AG04449 (cell line): ENCODE measurements at regions of chr9 and their contacts with region 1.

Region 1: DNA sequence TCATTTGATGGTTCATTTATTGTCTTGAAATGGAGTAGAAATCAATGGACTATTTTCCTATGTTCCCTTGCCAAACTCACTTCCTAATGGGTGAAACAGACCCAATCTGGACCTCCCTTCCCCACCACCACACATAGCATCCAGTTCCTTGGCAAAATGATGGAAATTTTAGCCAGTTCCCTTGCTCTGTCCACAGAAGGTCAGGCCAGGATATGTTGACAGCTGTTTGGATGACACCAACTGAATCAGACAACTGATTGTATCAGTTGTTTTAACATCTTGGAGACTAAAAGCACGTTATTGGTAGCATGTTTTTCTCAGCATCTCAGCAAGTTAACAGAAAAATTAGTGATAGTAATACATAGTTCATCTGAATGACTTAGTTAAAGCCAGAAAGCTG is 534.8 kb downstream of the PSAT1 start:
- DNase-seq: no peak
- H3K4me3 ChIP-seq: no peak overlapping the region
- CTCF ChIP-seq: no peak

Region 2: GRCh38 chr9:78713614-78714405 is 117.9 kb before region 1 on chr9:
- CTCF ChIA-PET with region 1: no interaction called
- POLR2A ChIA-PET with region 1: no interaction called
- DNase-seq: peak; percentile 41
- H3K4me3 ChIP-seq: no peak overlapping the region
- CTCF ChIP-seq: no peak

Region 3: DNA sequence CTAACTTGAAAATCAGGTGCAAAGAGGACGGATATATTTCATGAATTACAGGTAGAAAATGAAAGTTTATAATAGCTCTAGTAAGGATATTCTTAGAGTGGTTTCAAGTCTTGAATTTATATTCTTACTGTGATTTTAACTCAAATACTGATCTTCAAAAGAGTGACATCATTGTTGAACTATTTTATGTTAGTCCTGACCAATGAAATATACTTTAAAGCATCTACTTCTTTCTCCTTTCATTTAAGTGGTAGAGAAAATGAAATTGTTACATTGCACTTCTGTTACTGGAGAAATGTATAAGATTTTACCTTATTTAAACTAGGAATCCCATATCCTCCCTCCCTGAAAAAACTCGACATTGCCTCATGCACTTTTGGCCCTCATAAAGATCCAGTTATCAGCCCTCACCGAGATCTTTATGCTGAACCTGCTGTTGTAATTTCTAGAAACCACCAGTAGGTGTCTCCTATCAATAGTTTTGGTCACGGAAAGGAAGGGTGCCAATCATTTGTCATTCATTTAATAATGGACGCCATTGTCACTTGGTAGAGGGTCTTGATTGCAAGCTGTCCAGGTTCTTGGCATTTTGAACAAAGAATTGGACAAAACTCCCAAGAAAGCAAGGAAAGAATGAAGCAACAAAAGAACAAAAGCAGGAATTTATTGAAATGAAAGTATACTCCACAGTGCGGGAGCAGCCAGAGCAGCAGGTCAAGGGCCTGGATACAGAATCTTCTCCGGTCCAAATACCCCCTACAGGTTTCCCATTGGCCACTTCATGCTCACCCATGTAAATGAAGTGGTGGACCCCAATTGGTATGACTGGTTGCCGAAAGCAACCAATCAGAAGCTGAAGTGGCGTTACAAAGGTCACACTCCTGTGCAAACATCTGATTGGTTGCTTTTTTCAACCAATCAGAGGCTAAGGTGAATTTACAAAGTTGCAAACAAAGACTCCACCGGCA is 10.6 kb before region 1 on chr9:
- CTCF ChIA-PET with region 1: interaction called, 24 read pairs
- POLR2A ChIA-PET with region 1: no interaction called
- DNase-seq: no peak
- H3K4me3 ChIP-seq: no peak overlapping the region
- CTCF ChIP-seq: peak; percentile 38